Left cardiac atrium (tissue), 4 donors: ENCODE measurements at regions of chr12 and their contacts with region 1.

Region 1: GRCh38 chr12:48873096-48873495 is 7.4 kb upstream of the RND1 start:
- DNase-seq: no peak
- ATAC-seq: no peak

Region 2: DNA sequence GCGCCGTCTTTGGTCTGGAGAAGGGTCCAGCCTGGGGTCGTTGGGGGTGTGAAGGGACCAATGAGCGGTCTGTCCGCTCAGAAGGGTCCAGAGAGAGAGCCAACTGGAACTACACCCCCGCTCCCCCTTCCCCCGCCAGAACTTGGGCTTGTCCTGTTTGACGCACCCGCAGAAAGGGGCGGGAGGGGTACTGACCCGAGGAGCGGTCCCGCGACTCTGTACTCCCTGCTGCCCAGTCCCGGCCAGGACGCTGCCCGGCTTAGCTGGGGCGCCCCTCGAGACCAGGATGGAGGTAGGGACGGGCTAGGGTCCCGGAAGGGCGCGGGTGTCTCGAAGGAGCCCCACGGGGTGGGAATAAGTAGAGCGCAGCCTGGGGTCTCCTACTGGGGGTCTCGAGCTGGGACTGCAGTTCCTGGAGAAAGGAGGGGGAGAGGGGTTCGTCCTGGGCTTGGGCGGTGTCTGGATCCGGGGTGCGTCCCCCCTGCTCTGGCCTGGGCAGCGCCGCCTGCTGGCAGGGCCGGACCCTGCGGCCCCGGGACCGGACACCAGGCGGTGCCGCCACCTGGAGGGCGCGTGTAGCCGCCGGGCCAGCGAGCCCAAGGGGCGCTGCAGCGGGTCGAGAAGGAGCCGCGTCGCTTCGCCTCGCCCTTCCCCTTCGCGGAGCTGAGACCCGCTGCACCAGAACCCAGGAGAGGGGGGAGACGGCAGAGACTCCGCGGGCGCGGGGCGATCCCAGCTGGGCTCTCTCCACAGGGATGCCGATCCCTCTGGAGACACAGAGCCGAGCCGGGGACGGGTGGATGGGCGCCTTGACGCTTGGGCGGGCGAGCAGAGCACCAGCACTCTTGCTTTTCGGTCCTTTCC is 58.6 kb before region 1 on chr12:
- intact Hi-C with region 1: no loop called
- DNase-seq: peak; percentile 86
- ATAC-seq: peak; percentile 85 to 87

Region 3: GRCh38 chr12:48824905-48825304 is 48.2 kb before region 1 on chr12:
- intact Hi-C with region 1: no loop called
- DNase-seq: no peak
- ATAC-seq: no peak

Region 4: GRCh38 chr12:48924617-48925303 is 51.7 kb after region 1 on chr12:
- intact Hi-C with region 1: loop called in 1 of 2 experiments (anchors 5 kb)
- DNase-seq: peak; percentile 61
- ATAC-seq: peak; percentile 79 to 86

Region 5: GRCh38 chr12:49740930-49741881 is 868.1 kb after region 1 on chr12 and contains the start of gene TMBIM6:
- intact Hi-C with region 1: no loop called
- DNase-seq: peak; percentile 100
- ATAC-seq: peak; percentile 99
- total RNA-seq, gene TMBIM6: 260 to 276 TPM